ENCODE measurements at regions of chr6 and their contacts with region 1.

Region 1: GRCh38 chr6:30821862-30822782 is 62.2 kb upstream of the DDR1 start:
- DNase-seq: peak; percentile 57
- ATAC-seq: no peak
- H3K4me3 ChIP-seq: no peak overlapping the region
- H3K4me3 Mint-ChIP-seq: no peak overlapping the region
- H3K27ac ChIP-seq: no peak overlapping the region
- H3K27ac Mint-ChIP-seq: no peak overlapping the region
- H3K4me1 ChIP-seq: no peaks in the 10 kb centered on the region
- H3K4me1 Mint-ChIP-seq: peaks cover 11% of the 10 kb centered on the region
- H3K27me3 ChIP-seq: no peaks in the 10 kb centered on the region
- H3K27me3 Mint-ChIP-seq: peaks cover 2% of the 10 kb centered on the region
- CTCF ChIP-seq: peak; percentile 74

Region 2: GRCh38 chr6:30877419-30878371 is 55.6 kb after region 1 on chr6:
- CTCF ChIA-PET with region 1: interaction called, 53 read pairs
- POLR2A ChIA-PET with region 1: no interaction called
- intact Hi-C with region 1: loop called (anchors 1 kb)
- DNase-seq: peak; percentile 79
- ATAC-seq: peak; percentile 82
- H3K4me3 ChIP-seq: peak overlapping the region in 1 of 5 experiments; percentile 21
- H3K4me3 Mint-ChIP-seq: peak overlapping the region; percentile 48
- H3K27ac ChIP-seq: peak overlapping the region in 1 of 2 donors; percentile 44
- H3K27ac Mint-ChIP-seq: peak overlapping the region; percentile 54
- H3K4me1 ChIP-seq: peaks cover 27 to 28% of the 10 kb centered on the region in 2 donors
- H3K4me1 Mint-ChIP-seq: peaks cover 37% of the 10 kb centered on the region
- H3K27me3 ChIP-seq: no peaks in the 10 kb centered on the region
- H3K27me3 Mint-ChIP-seq: peaks cover 3% of the 10 kb centered on the region
- CTCF ChIP-seq: peak; percentile 82

Region 3: DNA sequence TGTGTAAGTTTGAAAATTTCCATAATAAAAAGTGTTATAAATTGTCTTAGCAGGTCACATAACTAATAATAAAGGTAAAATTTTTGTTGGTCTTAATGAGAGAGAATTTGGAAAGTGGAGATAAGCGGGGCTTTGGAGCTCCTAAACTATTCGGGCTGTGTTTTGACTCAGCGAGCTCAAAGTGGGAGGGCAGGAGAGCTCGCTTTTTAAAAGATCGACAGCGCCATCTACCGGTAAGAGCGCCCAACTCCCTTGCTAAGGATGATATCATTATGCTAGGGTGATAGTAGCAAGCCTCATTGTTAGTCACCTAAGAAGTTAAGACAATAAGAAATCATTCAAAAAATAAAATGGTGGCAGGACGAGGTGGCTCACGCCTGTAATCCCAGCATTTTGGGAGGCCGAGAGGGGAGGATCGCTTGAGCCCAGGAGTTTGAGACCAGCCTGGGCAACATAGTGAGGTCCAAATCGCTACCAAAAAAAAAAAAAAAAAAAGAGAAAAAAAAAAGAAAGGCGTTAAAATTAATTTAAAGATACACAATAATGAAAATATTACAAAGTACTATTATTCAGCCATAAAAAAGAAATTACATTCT is 265.5 kb after region 1 on chr6:
- CTCF ChIA-PET with region 1: interaction called, 237 read pairs
- POLR2A ChIA-PET with region 1: no interaction called
- intact Hi-C with region 1: loop called (anchors 1 kb)
- DNase-seq: peak; percentile 89
- ATAC-seq: peak; percentile 95
- H3K4me3 ChIP-seq: no peak overlapping the region
- H3K4me3 Mint-ChIP-seq: no peak overlapping the region
- H3K27ac ChIP-seq: no peak overlapping the region
- H3K27ac Mint-ChIP-seq: no peak overlapping the region
- H3K4me1 ChIP-seq: no peaks in the 10 kb centered on the region
- H3K4me1 Mint-ChIP-seq: no peaks in the 10 kb centered on the region
- H3K27me3 ChIP-seq: no peaks in the 10 kb centered on the region
- H3K27me3 Mint-ChIP-seq: peaks cover 21% of the 10 kb centered on the region
- CTCF ChIP-seq: peak; percentile 84